Sciatic nerve (tissue), 2 donors: ENCODE measurements at regions of chr7 and their contacts with region 1.

Region 1: GRCh38 chr7:17837488-17837887 is 102.8 kb downstream of the SNX13 start:
- DNase-seq: no peak
- ATAC-seq: no peak

Region 2: GRCh38 chr7:17854261-17855047 is 17.0 kb after region 1 on chr7:
- intact Hi-C with region 1: no loop called
- DNase-seq: no peak
- ATAC-seq: no peak

Region 3: DNA sequence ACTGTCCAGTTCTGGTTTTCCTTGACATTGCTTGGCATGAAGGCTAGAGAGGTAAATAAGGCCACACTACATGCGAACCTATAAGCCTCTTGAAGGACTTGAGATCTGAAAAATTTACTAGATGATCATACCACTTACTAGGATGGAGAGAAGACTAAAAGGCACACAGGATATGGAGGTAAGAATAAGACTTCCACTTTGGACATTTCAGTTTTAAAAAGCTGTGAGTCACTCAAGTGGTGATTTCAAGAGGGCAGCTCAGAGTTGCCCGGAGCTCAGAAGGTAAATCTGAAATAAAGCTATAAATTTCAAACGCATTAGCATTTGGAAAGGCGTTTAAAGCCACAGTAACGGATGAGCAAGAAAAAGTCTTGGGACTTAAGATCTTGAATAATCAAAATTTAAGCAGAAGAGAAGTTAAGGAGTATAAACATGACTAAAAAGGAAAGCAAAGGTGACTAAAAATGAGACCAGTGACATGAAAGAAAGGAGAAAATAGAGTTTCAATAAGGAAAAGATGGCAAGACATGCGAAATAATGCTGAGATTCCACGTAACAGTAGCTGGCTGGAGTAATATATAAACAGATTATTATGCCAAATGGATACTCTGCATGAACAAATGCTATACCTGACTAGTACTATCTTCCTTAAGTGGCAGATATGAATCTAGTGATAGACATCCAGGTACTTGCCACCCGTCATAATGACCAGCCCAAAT is 34.5 kb after region 1 on chr7:
- intact Hi-C with region 1: loop called (anchors 5 kb)
- DNase-seq: no peak
- ATAC-seq: no peak